ENCODE measurements at regions of chr12 and their contacts with region 1.

Region 1: GRCh38 chr12:12562585-12563261 is at the start of gene DUSP16:
- DNase-seq: peak; percentile 90
- ATAC-seq: peak; percentile 96
- H3K4me3 ChIP-seq: peak within 1 kb of the TSS; percentile 69 to 78
- H3K27ac ChIP-seq: peak within 1 kb of the TSS; percentile 86
- H3K4me1 ChIP-seq: peaks cover 15% of the 10 kb centered on the region
- H3K27me3 ChIP-seq: no peaks in the 10 kb centered on the region
- CTCF ChIP-seq: 0 out of 2 replicates have a peak, but pooled peaks have one; percentile 9
- total RNA-seq, gene DUSP16: 12.9 TPM

Region 2: DNA sequence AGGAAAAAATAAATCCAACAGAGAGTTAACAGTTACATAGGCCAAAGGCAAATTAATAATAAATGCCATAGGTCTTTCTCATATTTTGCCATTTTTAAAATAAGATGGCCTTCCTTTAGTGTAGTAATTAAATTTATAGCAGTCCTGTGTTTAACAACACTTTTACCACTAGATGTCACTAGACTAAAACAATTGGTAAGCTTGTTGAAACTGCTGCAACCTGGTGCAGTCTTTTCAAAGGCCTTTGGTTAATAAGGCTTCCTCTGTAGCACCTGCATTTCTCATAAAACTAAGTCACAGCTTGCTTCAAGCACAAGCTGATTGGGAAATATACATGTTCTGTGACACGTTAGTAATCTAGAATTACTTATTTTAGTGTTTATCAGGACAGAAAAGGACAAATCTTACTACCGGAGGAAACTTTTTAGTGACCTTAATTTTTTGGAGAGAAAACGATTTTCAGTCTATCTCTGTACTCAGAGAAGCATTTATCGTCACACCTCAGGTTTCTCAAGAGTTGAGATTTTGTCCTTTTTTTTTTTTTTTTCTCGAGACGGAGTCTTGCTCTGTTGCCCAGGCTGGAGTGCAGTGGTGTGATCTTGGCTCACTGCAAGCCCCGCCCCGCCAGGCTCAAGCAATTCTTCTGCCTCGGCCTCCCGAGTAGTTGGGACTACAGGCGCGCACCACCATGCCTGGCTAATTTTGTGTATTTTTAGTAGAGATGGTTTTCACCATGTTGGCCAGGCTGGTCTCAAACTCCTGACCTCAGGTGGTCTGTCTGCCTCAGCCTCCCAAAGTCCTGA is 185.9 kb before region 1 on chr12:
- CTCF ChIA-PET with region 1: no interaction called
- POLR2A ChIA-PET with region 1: no interaction called
- in situ Hi-C with region 1: no loop called
- intact Hi-C with region 1: loop called (anchors 2 kb)
- DNase-seq: peak; percentile 52
- ATAC-seq: peak; percentile 83
- H3K4me3 ChIP-seq: no peak overlapping the region
- H3K27ac ChIP-seq: no peak overlapping the region
- H3K4me1 ChIP-seq: no peaks in the 10 kb centered on the region
- H3K27me3 ChIP-seq: no peaks in the 10 kb centered on the region
- CTCF ChIP-seq: peak; percentile 59; the same call in 1 of the 2 replicates

Region 3: GRCh38 chr12:12390390-12390789 is 172.3 kb before region 1 on chr12:
- CTCF ChIA-PET with region 1: no interaction called
- POLR2A ChIA-PET with region 1: interaction called, 12 read pairs
- in situ Hi-C with region 1: no loop called
- intact Hi-C with region 1: no loop called
- DNase-seq: no peak
- ATAC-seq: no peak
- H3K4me3 ChIP-seq: no peak overlapping the region
- H3K27ac ChIP-seq: no peak overlapping the region
- H3K4me1 ChIP-seq: no peaks in the 10 kb centered on the region
- H3K27me3 ChIP-seq: no peaks in the 10 kb centered on the region
- CTCF ChIP-seq: no peak

Measured in Panc1 (cell line).